Activated CD8-positive, alpha-beta T cell treated with anti-CD3 and anti-CD28 coated beads for 36 hours (primary cell): ENCODE measurements at regions of chr7 and their contacts with region 1.

Region 1: DNA sequence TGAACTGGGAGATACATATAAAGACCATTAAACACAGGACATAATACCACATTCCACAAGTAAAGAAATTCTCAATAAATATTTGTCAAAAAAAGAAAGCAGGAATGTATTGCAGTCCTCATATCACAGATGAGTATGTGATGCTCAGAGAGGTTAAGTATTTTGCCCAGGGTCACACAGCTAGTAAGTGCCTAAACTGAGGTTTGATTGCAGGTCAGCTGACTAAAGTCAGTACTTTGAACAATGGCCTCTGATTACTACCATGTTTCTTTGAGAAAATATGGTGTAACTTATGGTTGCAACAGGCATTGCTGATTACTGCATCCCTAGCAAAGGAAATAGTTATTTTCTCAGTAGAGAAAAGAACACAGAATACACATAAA is 267.1 kb downstream of the ELMO1 start:
- DNase-seq: no peak
- ATAC-seq: no peak
- H3K4me3 Mint-ChIP-seq: no peak overlapping the region
- H3K27ac Mint-ChIP-seq: no peak overlapping the region
- H3K4me1 Mint-ChIP-seq: peaks cover 7% of the 10 kb centered on the region
- H3K27me3 Mint-ChIP-seq: no peaks in the 10 kb centered on the region
- CTCF ChIP-seq: no peak

Region 2: DNA sequence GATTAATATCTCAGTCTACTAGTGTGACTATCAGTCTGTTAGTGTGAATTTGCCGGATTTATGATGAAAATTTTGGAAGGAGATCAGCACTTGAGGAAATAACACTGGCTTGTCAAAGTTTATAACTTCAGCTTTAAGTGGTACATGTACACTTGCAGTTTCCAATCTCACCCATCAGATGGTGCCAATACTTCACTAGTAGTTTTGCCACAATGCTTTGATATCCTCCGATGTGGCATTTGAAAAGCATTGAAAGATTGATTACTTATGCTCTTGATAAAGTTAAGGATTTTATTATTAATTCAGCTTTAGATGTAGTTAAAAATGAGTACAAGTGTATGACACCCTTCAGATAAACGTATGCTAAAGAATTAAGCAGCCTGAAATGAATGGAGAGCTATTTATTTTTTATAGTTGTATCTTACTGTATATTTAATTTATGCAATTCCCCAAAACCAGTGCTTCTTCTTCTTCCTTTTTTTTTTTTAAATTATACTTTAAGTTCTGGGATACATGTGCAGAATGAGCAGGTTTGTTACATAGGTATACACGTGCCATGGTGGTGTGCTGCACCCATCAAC is 693.7 kb before region 1 on chr7:
- CTCF ChIA-PET with region 1: interaction called, 93 read pairs
- POLR2A ChIA-PET with region 1: interaction called, 3 read pairs
- intact Hi-C with region 1: loop called (anchors 5 kb)
- DNase-seq: peak; percentile 46
- ATAC-seq: peak; percentile 79
- H3K4me3 Mint-ChIP-seq: no peak overlapping the region
- H3K27ac Mint-ChIP-seq: no peak overlapping the region
- H3K4me1 Mint-ChIP-seq: no peaks in the 10 kb centered on the region
- H3K27me3 Mint-ChIP-seq: no peaks in the 10 kb centered on the region
- CTCF ChIP-seq: peak; percentile 82

Region 3: GRCh38 chr7:36677769-36678437 is 503.6 kb before region 1 on chr7:
- CTCF ChIA-PET with region 1: interaction called, 21 read pairs
- POLR2A ChIA-PET with region 1: no interaction called
- intact Hi-C with region 1: no loop called
- DNase-seq: peak; percentile 91
- ATAC-seq: peak; percentile 88
- H3K4me3 Mint-ChIP-seq: peak overlapping the region; percentile 56
- H3K27ac Mint-ChIP-seq: peak overlapping the region; percentile 94
- H3K4me1 Mint-ChIP-seq: peaks cover 76% of the 10 kb centered on the region
- H3K27me3 Mint-ChIP-seq: no peaks in the 10 kb centered on the region
- CTCF ChIP-seq: no peak

Region 4: DNA sequence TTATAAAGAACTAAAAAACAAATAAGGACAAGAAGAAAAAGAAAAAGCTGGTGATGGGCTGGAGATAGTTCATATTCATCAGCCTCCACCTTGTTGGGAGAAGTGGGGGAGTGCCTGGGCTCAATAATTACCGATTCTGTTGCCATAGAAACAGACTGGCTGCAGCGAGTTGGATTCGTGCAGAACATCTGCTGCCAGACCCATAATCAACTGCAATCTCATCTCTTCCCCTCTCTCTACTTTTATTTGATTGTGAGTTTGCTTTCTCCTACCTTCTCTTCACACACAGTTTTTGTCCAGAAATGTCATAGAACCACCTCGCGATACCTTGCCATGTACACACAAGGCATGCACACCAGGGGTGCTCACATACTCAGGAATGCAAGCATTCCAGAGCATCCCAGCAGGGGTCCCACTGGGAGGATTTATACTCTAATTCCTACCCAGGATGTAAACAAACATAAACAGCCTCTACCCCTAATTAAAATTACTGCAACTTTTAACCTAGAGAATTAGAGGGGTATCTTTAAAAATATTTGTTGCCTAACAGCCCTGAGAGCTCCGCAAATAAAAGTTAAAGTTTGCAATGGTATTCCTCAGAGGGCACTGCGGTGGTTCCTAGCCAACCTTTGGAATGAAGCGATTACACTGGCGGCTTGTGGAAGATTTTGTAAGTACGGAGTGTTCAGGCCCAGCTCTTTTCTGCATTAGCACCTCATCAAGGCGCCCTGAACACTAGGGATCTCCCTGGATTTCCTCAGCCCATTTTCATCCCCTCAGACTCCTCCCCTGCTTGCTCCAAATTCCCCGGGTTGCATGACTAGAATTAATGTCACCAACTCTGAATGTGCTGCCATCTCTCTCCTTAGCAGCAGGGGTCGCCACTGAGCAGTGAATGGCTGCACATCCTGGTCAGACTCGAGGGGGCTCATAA is 194.8 kb before region 1 on chr7:
- CTCF ChIA-PET with region 1: interaction called, 78 read pairs
- POLR2A ChIA-PET with region 1: no interaction called
- intact Hi-C with region 1: loop called (anchors 5 kb)
- DNase-seq: peak; percentile 79
- ATAC-seq: peak; percentile 91
- H3K4me3 Mint-ChIP-seq: no peak overlapping the region
- H3K27ac Mint-ChIP-seq: no peak overlapping the region
- H3K4me1 Mint-ChIP-seq: peaks cover 31% of the 10 kb centered on the region
- H3K27me3 Mint-ChIP-seq: no peaks in the 10 kb centered on the region
- CTCF ChIP-seq: peak; percentile 79

Region 5: DNA sequence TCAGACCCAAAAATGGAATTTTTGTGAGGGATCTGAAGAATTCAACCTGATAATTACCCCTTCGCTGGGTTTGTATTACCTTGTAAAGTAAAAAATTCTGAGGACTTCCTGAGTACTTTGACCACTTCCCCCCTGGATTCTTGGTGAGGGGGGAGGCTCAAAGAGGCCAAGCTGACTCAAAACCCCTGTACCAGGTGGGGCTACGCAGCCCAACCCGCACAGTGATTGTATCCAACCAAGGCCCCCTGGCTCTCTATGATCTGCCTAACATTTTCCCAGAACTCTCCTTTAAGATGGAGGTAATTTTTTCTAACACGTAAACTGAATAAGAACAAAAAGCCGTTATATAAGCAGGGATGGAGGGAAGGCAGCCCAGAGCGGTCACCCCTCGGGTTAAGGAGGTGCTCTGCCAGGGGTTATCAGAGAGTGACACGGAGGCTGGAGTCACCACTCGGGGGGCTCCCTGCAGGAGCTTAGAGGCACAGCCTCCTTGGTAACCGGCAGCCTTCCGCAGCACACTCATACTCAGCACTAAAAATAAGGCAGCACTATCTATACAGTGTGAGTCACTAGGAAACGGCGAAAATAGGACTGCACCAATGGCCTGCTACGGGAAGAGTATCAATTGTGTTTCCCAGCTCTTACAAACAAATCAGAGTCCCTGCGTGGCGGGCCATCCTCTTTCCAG is 11.7 kb after region 1 on chr7:
- CTCF ChIA-PET with region 1: interaction called, 33 read pairs
- POLR2A ChIA-PET with region 1: no interaction called
- intact Hi-C with region 1: no loop called
- DNase-seq: no peak
- ATAC-seq: no peak
- H3K4me3 Mint-ChIP-seq: no peak overlapping the region
- H3K27ac Mint-ChIP-seq: no peak overlapping the region
- H3K4me1 Mint-ChIP-seq: peaks cover 9% of the 10 kb centered on the region
- H3K27me3 Mint-ChIP-seq: no peaks in the 10 kb centered on the region
- CTCF ChIP-seq: no peak

Region 6: DNA sequence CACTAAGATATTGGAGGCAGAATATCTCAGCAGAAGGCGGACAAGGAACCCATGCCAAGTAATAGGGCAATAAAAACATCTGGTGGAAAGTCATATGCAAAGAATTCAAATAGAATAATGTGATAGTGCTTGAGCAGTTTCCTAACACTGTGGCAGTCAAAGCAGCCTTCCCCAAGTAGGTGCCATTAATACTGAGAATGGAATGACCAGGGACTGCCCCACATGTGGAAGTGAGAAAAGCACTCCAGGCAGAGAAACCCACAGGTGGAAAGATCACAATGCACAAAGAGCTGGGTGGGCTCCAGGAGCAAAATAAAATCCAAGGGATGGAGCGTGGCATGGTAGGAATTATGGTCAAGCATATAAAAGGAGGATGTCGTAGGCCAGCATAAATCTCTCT is 602.5 kb after region 1 on chr7:
- CTCF ChIA-PET with region 1: no interaction called
- POLR2A ChIA-PET with region 1: no interaction called
- intact Hi-C with region 1: no loop called
- DNase-seq: no peak
- ATAC-seq: no peak
- H3K4me3 Mint-ChIP-seq: no peak overlapping the region
- H3K27ac Mint-ChIP-seq: no peak overlapping the region
- H3K4me1 Mint-ChIP-seq: peaks cover 4% of the 10 kb centered on the region
- H3K27me3 Mint-ChIP-seq: no peaks in the 10 kb centered on the region
- CTCF ChIP-seq: no peak